Psoas muscle (tissue), 8 donors: ENCODE measurements at regions of chr11 and their contacts with region 1.

Region 1: GRCh38 chr11:128039140-128040021 is 548.0 kb downstream of the ETS1 start:
- DNase-seq: peak; percentile 52 to 72
- ATAC-seq: peak; percentile 60 to 86 (median 78)
- H3K4me3 ChIP-seq: no peak overlapping the region
- H3K27ac ChIP-seq: no peak overlapping the region
- H3K4me1 ChIP-seq: no peaks in the 10 kb centered on the region
- H3K27me3 ChIP-seq: peaks cover 0 to 6% (median 0%) of the 10 kb centered on the region in 3 donors
- CTCF ChIP-seq: no peak

Region 2: DNA sequence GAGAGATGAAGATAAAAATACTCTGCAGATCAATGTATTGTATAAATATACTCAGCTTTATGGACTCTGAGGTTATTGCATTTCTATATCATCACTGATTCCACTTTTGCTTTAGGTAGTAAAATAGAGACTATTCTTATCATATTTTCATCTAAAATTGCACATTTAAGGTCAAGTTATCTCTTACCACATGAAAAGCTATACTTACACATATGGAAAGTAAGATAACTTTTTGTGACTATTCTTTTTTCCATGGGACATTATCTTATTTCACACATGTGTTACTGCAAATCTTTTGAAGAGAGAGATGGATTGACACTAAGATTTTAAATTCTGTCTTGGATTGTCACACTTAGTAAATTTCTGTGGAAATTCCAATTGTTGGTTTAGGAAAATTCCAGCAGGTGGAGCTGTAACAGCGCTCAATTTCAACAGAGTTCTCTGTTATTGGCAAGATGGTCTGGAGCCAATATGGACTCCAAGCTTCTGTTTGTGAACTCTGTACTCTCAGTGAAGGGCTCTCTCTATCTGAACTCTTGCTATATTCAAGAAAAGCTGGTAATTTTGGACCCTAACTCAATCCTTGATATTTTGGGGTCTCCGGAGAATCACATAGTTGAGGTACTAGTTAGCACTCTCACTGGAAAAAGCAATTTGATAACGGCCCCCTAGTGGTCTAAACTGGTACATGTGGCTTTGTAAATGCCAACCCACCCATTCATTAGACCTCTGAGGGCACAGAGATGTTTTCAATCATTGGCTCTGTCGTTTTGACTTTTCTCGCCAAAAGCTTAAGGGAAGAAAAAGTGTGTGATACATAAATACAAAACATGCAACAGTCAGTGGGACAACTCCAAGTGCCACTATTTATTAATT is 118.3 kb after region 1 on chr11:
- intact Hi-C with region 1: loop called in 1 of 2 experiments (anchors 5 kb)
- DNase-seq: no peak
- ATAC-seq: peak; percentile 48 to 85 (median 70)
- H3K4me3 ChIP-seq: no peak overlapping the region
- H3K27ac ChIP-seq: no peak overlapping the region
- H3K4me1 ChIP-seq: no peaks in the 10 kb centered on the region
- H3K27me3 ChIP-seq: peaks cover 0 to 2% (median 0%) of the 10 kb centered on the region in 3 donors
- CTCF ChIP-seq: peak; percentile 67

Region 3: DNA sequence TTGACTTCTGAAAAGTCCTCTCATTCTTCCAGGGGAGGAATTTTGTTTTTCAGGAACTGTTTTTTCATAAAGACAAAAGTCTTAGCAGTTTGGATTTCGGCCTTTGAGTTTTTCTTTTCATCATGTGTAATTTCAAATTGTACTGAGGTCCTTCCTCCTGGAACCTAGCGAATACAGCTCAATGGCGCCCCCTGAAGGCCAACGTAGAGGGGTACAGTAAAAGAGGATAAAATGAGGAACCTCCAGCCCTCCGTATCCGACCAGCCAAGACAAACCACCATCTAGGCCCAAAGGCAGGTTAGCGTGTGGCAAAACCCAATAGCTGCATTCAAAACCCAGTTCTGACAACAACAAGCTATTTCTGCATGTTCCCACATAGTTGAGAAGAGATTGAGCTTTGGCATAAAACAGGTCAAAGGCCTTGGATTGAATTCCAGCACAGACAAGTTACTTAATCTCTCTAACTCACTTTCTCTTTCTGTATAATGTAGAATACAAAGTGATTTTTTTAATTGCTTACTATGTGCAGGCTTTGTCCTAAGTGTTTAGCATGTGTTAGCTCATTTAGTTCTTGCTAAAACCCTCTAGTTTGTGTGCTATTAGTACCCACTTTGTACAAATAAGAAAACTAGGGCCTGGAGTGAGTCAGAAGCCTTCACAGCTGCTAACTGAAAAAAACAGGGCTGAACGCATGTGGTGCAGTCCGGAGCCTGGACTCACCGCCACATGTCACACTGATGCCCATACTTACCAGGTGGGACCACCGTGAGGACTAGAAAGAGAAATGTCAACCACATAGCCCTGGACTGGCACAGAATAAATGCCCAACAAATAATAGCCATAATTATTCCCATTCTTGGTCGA is 591.2 kb after region 1 on chr11:
- intact Hi-C with region 1: loop called in 1 of 2 experiments (anchors 10 kb)
- DNase-seq: peak; percentile 89 to 93
- ATAC-seq: peak; percentile 89 to 98 (median 92)
- H3K4me3 ChIP-seq: no peak overlapping the region
- H3K27ac ChIP-seq: no peak overlapping the region
- H3K4me1 ChIP-seq: peaks cover 10% of the 10 kb centered on the region
- H3K27me3 ChIP-seq: no peaks in the 10 kb centered on the region
- CTCF ChIP-seq: peak; percentile 92

Region 4: GRCh38 chr11:128831174-128832120 is 792.1 kb after region 1 on chr11:
- intact Hi-C with region 1: loop called (anchors 5 to 10 kb)
- DNase-seq: peak; percentile 78 to 87
- ATAC-seq: peak; percentile 76 to 92 (median 82)
- H3K4me3 ChIP-seq: no peak overlapping the region
- H3K27ac ChIP-seq: no peak overlapping the region
- H3K4me1 ChIP-seq: no peaks in the 10 kb centered on the region
- H3K27me3 ChIP-seq: no peaks in the 10 kb centered on the region
- CTCF ChIP-seq: peak; percentile 88

Region 5: DNA sequence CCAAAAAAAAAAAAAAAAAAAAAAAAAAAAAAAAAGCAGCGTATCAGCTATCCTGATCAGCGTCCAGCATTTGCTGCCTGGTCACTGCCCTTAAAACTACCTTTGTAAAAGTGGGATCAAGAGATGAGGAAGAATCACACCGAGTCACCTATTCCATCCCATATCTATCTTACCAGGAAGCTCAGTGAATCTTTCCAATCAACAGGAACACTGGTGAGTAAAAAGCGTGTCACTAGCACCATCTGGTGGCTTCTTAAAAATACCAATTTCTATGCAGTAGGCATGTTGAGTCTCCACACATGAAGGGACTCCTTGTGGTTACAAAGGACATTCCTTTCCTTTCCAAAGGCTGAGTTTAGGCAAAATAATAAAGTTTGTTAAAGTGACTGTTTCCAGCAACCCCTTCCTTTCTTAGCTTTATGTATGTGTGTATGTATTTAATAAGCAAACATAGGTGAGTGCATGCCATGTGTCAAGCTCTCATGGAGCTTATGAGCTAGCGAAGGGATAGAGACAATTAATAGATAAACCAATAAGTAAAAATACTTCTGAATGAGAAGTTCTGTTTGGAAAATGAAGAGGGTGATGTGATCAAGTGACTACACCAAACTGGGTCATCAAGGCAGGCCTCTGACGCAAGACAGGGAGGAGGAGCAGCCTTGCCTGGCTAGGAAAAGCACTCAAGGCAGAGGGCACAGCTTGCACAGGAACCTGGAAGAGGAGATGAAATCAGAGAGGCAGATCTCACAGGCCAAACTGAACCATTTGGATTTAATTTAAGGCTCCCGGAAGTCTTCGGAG is 917.2 kb after region 1 on chr11:
- intact Hi-C with region 1: loop called in 1 of 2 experiments (anchors 10 kb)
- DNase-seq: no peak
- ATAC-seq: peak; percentile 73 to 88 (median 75)
- H3K4me3 ChIP-seq: no peak overlapping the region
- H3K27ac ChIP-seq: no peak overlapping the region
- H3K4me1 ChIP-seq: no peaks in the 10 kb centered on the region
- H3K27me3 ChIP-seq: peaks cover 0 to 3% (median 0%) of the 10 kb centered on the region in 3 donors
- CTCF ChIP-seq: peak; percentile 73